ENCODE measurements at regions of chr12 and their contacts with region 1.

Region 1: DNA sequence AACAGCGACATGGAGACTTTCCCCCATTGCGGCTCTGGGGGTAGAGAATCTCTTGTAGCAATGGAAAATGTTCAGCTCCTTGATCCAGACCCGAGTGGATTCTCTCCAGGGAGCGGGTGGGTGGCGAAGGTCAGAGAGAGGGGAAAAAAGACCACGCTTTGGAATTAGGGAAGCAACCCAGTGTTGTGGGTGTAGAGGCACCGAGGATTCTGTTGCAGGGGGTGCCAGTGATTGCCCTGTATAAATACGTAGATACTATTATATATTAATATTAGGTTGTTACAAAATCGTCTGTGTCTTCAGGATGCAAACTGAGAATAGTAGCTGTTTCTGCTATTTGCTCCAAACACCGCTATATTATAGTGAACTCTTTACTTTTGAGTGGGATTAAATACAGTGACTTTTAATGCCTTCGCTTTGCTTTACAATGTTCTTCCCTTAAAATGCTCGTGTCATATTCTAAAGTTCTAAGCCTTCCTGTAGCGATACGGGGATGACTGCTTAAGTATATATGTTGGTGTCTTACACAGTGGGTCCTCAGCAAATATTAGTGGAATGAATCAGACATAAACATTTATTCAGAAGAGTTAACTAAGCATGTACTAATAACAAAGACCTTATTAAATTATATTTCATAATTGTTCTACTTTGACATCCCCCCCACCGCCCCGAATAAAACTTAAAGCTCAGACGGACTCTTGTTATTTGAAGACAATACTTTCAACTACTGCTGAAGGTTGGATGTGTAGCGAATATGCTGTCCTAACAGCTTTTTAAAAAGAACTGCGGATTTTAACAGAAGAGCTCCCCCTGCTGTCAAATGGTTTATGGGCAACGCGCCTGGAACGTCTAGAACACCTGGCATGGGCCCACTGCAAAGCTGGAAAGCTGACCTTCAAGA is 136.4 kb upstream of the KRAS start:
- DNase-seq: peak; percentile 78 to 86 (median 83)
- H3K4me3 ChIP-seq: peak overlapping the region; percentile 62 to 92
- H3K4me3 Mint-ChIP-seq: peak overlapping the region; percentile 94 to 100 (median 98)
- H3K27ac ChIP-seq: peak overlapping the region; percentile 98
- H3K27ac Mint-ChIP-seq: peak overlapping the region; percentile 99 to 100 (median 100)
- H3K4me1 ChIP-seq: peaks cover 40% of the 10 kb centered on the region
- H3K4me1 Mint-ChIP-seq: peaks cover 27 to 63% (median 42%) of the 10 kb centered on the region in 4 donors
- H3K27me3 ChIP-seq: no peaks in the 10 kb centered on the region
- H3K27me3 Mint-ChIP-seq: peaks cover 0 to 2% of the 10 kb centered on the region in 2 donors

Region 2: DNA sequence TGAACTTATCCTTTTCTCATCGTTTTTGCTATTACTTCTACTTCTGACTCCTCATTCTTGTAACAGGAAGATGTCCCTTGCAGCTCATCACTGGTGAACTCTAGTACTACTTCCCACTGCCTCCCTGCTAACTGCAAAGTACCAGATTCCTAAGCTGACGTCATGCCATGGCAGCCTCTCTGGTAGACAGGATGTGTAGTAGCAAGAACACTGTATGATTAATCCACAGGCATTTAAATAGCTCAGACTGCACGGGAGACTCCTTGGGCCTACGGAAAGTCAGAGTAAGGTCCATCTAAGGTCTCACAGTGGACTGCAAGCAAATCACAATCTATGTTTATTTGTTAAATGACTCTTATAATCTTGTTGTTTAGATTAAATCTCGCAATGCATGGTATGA is 235.6 kb before region 1 on chr12:
- CTCF ChIA-PET with region 1: interaction called, 6 read pairs
- POLR2A ChIA-PET with region 1: no interaction called
- intact Hi-C with region 1: loop called (anchors 1 kb)
- DNase-seq: no peak
- H3K4me3 ChIP-seq: no peak overlapping the region
- H3K4me3 Mint-ChIP-seq: no peak overlapping the region
- H3K27ac ChIP-seq: no peak overlapping the region
- H3K27ac Mint-ChIP-seq: peak overlapping the region in 1 of 7 donors; percentile 5
- H3K4me1 ChIP-seq: peaks cover 3% of the 10 kb centered on the region
- H3K4me1 Mint-ChIP-seq: peaks cover 0 to 8% (median 6%) of the 10 kb centered on the region in 4 donors
- H3K27me3 ChIP-seq: no peaks in the 10 kb centered on the region
- H3K27me3 Mint-ChIP-seq: no peaks in the 10 kb centered on the region

Region 3: GRCh38 chr12:25208554-25208953 is 178.5 kb before region 1 on chr12:
- CTCF ChIA-PET with region 1: no interaction called
- POLR2A ChIA-PET with region 1: interaction called, 6 read pairs
- intact Hi-C with region 1: loop called (anchors 1 kb)
- DNase-seq: no peak
- H3K4me3 ChIP-seq: no peak overlapping the region
- H3K4me3 Mint-ChIP-seq: no peak overlapping the region
- H3K27ac ChIP-seq: no peak overlapping the region
- H3K27ac Mint-ChIP-seq: peak overlapping the region in 3 of 7 donors; percentile 37 to 88 (median 50)
- H3K4me1 ChIP-seq: no peaks in the 10 kb centered on the region
- H3K4me1 Mint-ChIP-seq: peaks cover 0 to 6% (median 4%) of the 10 kb centered on the region in 4 donors
- H3K27me3 ChIP-seq: no peaks in the 10 kb centered on the region
- H3K27me3 Mint-ChIP-seq: no peaks in the 10 kb centered on the region

Region 4: DNA sequence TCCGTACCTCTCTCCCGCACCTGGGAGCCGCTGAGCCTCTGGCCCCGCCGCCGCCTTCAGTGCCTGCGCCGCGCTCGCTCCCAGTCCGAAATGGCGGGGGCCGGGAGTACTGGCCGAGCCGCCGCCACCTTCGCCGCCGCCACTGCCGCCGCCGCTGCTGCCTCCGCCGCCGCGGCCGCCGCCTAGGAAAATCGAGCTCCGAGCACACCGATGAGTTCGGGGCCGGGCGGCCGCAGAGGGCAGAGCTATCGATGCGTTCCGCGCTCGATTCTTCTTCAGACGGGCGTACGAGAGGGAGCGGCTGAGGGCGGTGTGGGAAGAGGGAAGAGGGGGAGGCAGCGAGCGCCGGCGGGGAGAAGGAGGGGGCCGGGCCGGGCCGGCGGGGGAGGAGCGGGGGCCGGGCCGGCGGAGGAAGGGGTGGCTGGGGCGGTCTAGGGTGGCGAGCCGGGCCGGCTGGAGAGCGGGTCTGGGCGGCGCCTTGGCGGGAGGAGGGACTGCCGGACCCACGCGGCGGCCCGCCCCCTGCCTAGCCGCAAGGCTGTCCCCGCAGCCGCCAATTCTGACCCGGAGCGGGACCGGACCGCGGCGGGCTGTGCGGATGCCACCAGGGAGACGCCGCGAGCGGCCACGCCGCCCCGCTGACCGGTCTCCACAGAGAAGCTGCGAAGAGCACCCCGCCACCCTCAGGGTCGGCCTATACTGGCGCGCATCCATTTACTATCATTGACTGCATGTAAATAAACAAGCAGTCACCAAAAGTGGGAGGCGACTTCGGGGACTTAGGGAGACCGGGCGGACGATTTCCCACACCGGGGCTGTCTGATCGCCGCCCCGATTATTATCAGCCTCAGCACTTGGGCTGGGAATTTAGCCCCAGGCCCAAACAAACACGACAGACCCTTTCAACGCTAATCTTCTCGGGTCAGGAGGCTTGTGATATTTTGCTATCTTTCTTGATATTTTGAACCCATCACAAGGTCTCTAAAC is 136.0 kb before region 1 on chr12 and contains the start of gene KRAS:
- CTCF ChIA-PET with region 1: interaction called, 19 read pairs
- POLR2A ChIA-PET with region 1: interaction called, 14 read pairs
- intact Hi-C with region 1: no loop called
- DNase-seq: peak; percentile 90 to 93 (median 91)
- H3K4me3 ChIP-seq: peak within 1 kb of the TSS; percentile 67 to 90
- H3K4me3 Mint-ChIP-seq: peak within 1 kb of the TSS; percentile 92 to 96 (median 94)
- H3K27ac ChIP-seq: peak within 1 kb of the TSS; percentile 68
- H3K27ac Mint-ChIP-seq: peak within 1 kb of the TSS; percentile 91 to 98 (median 95)
- H3K4me1 ChIP-seq: peaks cover 33% of the 10 kb centered on the region
- H3K4me1 Mint-ChIP-seq: peaks cover 13 to 56% (median 40%) of the 10 kb centered on the region in 4 donors
- H3K27me3 ChIP-seq: no peaks in the 10 kb centered on the region
- H3K27me3 Mint-ChIP-seq: no peaks in the 10 kb centered on the region
- total RNA-seq, gene KRAS: 34.4 to 34.8 TPM

Region 5: GRCh38 chr12:25401547-25402345 is 14.7 kb after region 1 on chr12:
- CTCF ChIA-PET with region 1: interaction called, 11 read pairs
- POLR2A ChIA-PET with region 1: no interaction called
- intact Hi-C with region 1: no loop called
- DNase-seq: no peak
- H3K4me3 ChIP-seq: no peak overlapping the region
- H3K4me3 Mint-ChIP-seq: no peak overlapping the region
- H3K27ac ChIP-seq: no peak overlapping the region
- H3K27ac Mint-ChIP-seq: no peak overlapping the region
- H3K4me1 ChIP-seq: no peaks in the 10 kb centered on the region
- H3K4me1 Mint-ChIP-seq: no peaks in the 10 kb centered on the region
- H3K27me3 ChIP-seq: no peaks in the 10 kb centered on the region
- H3K27me3 Mint-ChIP-seq: peaks cover 2 to 3% of the 10 kb centered on the region in 2 donors

Region 6: GRCh38 chr12:25447046-25447445 is 60.0 kb after region 1 on chr12:
- CTCF ChIA-PET with region 1: no interaction called
- POLR2A ChIA-PET with region 1: no interaction called
- intact Hi-C with region 1: no loop called
- DNase-seq: no peak
- H3K4me3 ChIP-seq: no peak overlapping the region
- H3K4me3 Mint-ChIP-seq: no peak overlapping the region
- H3K27ac ChIP-seq: no peak overlapping the region
- H3K27ac Mint-ChIP-seq: no peak overlapping the region
- H3K4me1 ChIP-seq: no peaks in the 10 kb centered on the region
- H3K4me1 Mint-ChIP-seq: no peaks in the 10 kb centered on the region
- H3K27me3 ChIP-seq: no peaks in the 10 kb centered on the region
- H3K27me3 Mint-ChIP-seq: peaks cover 6 to 9% of the 10 kb centered on the region in 2 donors

Measured in CD4-positive, alpha-beta memory T cell (primary cell).